Activated CD8-positive, alpha-beta T cell treated with anti-CD3 and anti-CD28 coated beads, Interleukin-2, amount 10 ng/mL, durations not matched to agents 7 days and 5 days (primary cell): ENCODE measurements at regions of chr1 and their contacts with region 1.

Region 1: DNA sequence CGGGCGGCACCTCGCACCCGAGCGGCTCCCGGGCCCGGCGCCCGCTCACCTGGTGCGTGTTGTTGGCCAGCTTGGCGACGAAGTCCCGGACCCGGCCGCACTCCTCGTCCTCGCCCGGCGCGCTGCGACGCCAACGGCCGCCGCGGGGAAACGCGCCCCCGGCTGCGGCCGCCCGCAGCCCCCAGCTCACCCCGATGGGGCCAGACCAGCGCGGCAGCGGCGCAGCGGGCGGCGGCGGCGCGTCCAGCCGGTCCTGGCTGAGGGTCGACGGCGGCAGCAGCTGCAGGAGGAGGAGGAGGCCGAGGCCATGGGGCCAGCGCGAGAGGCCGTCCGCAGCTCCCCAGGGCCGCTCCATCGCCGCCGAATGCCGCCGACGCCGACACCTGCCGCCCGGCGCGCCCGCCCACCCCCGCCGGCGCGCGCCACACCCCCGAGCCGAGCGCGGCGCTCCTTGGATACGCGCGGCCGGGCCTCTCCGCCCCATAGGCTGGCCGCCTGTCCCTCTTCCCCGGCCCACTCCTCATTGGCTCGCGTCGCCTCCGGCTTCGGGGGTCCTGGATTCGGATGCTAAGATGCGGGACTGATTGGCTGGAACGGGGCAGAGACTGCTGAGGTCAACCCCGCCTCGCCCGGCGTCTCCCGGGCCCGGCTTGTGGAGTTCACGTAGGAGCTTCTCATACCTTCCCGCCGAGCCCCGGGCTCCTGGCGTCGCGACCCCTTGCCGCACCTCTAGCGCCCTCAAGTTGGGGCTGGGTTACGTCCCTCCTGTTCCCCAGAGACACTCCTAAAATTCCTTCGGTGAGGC is at the start of gene SORT1:
- DNase-seq: peak; percentile 77
- ATAC-seq: peak; percentile 98
- H3K4me3 Mint-ChIP-seq: peak within 1 kb of the TSS; percentile 82
- H3K27ac Mint-ChIP-seq: peak within 1 kb of the TSS; percentile 33
- H3K4me1 Mint-ChIP-seq: peaks cover 41% of the 10 kb centered on the region
- H3K27me3 Mint-ChIP-seq: peaks cover 34% of the 10 kb centered on the region
- total RNA-seq, gene SORT1: 10.8 to 14.0 TPM

Region 2: GRCh38 chr1:108877348-108878159 is 520.2 kb before region 1 on chr1:
- CTCF ChIA-PET with region 1: no interaction called
- POLR2A ChIA-PET with region 1: no interaction called
- DNase-seq: no peak
- ATAC-seq: no peak
- H3K4me3 Mint-ChIP-seq: peak overlapping the region; percentile 96
- H3K27ac Mint-ChIP-seq: peak overlapping the region; percentile 89
- H3K4me1 Mint-ChIP-seq: peaks cover 24% of the 10 kb centered on the region
- H3K27me3 Mint-ChIP-seq: peaks cover 23% of the 10 kb centered on the region

Region 3: DNA sequence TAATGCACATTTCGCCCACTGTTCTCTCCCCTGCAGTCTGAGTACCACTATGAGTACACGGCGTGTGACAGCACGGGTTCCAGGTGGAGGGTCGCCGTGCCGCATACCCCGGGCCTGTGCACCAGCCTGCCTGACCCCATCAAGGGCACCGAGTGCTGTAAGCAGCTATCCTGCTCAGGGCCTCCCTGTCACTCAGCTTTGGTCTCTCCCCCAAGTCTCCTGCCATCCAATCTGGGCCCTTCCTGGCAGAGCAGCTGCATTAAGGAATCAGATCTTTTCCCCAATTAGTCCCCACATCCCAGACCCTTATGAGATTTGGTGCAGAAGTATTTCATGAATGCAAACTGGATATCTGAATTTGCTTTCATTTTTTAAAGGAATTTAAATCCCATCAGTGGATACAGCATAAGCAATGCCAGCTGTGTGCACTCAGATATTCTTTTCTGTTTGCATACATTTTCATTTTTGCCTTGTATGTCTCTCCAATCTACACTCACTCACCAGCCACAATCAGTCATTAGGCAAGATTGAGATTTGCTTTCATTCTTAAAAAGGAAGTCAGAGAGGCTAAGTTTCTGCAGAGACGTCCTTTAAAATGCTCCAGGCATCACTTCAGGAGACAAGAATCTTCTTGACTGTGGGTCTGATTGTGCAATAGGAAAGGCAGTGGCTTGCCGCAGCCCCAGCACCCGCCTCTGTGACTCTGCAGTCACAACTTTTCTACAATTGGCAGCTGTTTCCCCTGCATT is 235.7 kb before region 1 on chr1:
- CTCF ChIA-PET with region 1: no interaction called
- POLR2A ChIA-PET with region 1: no interaction called
- DNase-seq: peak; percentile 75
- ATAC-seq: peak; percentile 92
- H3K4me3 Mint-ChIP-seq: peak overlapping the region; percentile 42
- H3K27ac Mint-ChIP-seq: peak overlapping the region; percentile 72
- H3K4me1 Mint-ChIP-seq: peaks cover 24% of the 10 kb centered on the region
- H3K27me3 Mint-ChIP-seq: no peaks in the 10 kb centered on the region

Region 4: DNA sequence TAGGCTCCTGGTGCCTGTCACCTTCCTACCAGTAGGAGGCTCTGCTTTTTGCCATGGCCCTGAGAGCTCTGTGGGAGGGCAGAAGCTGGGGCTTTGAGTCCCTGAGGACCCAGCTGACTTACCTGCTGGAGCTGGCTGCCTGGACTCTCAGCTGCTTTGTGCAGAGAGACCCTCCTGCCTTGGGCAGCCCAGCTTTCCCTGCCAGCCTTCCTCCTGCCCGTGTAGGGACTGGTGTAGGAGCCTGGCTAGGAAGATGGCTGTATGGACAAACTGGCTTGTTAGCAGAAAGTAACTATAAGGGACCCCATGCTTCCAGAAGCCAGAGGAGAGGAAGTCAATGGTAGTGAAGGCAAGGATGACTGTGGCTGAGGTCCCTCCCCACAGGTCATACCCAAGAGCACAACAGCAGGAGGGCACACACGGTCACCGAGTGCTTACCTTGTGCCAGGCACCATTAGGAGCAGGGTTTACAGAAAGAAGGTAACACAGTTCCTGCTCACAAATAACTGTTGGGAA is 158.1 kb before region 1 on chr1:
- CTCF ChIA-PET with region 1: interaction called, 15 read pairs
- POLR2A ChIA-PET with region 1: no interaction called
- DNase-seq: peak; percentile 44
- ATAC-seq: peak; percentile 57
- H3K4me3 Mint-ChIP-seq: no peak overlapping the region
- H3K27ac Mint-ChIP-seq: no peak overlapping the region
- H3K4me1 Mint-ChIP-seq: peaks cover 14% of the 10 kb centered on the region
- H3K27me3 Mint-ChIP-seq: peaks cover 13% of the 10 kb centered on the region

Region 5: GRCh38 chr1:109263597-109264398 is 133.9 kb before region 1 on chr1:
- CTCF ChIA-PET with region 1: interaction called, 51 read pairs
- POLR2A ChIA-PET with region 1: no interaction called
- DNase-seq: peak; percentile 86
- ATAC-seq: peak; percentile 93
- H3K4me3 Mint-ChIP-seq: no peak overlapping the region
- H3K27ac Mint-ChIP-seq: peak overlapping the region; percentile 39
- H3K4me1 Mint-ChIP-seq: peaks cover 4% of the 10 kb centered on the region
- H3K27me3 Mint-ChIP-seq: no peaks in the 10 kb centered on the region

Region 6: GRCh38 chr1:109277434-109278204 is 120.1 kb before region 1 on chr1:
- CTCF ChIA-PET with region 1: interaction called, 166 read pairs
- POLR2A ChIA-PET with region 1: interaction called, 7 read pairs
- DNase-seq: peak; percentile 79
- ATAC-seq: peak; percentile 79
- H3K4me3 Mint-ChIP-seq: no peak overlapping the region
- H3K27ac Mint-ChIP-seq: peak overlapping the region; percentile 54
- H3K4me1 Mint-ChIP-seq: peaks cover 45% of the 10 kb centered on the region
- H3K27me3 Mint-ChIP-seq: no peaks in the 10 kb centered on the region

Region 7: GRCh38 chr1:109282952-109283747 is 114.6 kb before region 1 on chr1 and contains the start of gene PSRC1:
- CTCF ChIA-PET with region 1: interaction called, 166 read pairs
- POLR2A ChIA-PET with region 1: interaction called, 7 read pairs
- DNase-seq: peak; percentile 93
- ATAC-seq: peak; percentile 97
- H3K4me3 Mint-ChIP-seq: peak within 1 kb of the TSS; percentile 99
- H3K27ac Mint-ChIP-seq: peak within 1 kb of the TSS; percentile 91
- H3K4me1 Mint-ChIP-seq: peaks cover 31% of the 10 kb centered on the region
- H3K27me3 Mint-ChIP-seq: peaks cover 7% of the 10 kb centered on the region
- total RNA-seq, gene PSRC1: 38.2 to 40.7 TPM

Region 8: DNA sequence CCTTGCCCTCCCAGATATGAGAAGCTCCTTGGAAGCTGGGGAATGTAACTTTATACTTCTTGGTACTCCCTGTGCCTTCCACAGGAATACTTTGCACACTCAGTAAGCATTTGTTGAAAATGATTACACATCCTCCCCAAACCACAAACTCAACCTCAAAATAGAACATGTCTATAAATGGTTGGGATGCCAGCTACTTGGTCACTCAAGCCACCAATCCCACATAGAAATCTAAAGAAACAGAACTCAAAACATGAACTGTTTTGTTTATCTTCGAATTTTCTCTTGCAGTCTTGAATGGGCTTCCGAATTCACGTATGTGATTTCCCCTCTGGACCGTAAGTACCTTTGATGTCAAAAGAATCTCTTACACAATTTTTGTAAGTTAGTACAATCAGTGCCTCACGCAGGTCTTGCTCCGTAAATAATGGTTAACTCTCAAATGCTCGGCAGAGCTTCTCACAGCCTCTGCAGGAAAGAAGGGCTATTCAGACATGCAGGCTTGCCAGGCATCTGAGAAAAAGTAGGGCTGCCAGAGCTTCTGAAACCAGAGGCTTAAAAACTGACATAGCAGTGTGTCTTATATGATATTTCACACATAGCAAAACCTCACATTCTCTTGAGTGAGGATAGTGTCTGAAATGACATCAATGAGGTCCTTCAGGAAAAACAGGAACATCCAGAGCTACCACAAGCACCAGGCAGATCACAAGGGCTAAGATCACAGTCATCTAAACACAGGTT is 26.9 kb before region 1 on chr1:
- CTCF ChIA-PET with region 1: interaction called, 10 read pairs
- POLR2A ChIA-PET with region 1: no interaction called
- DNase-seq: peak; percentile 25
- ATAC-seq: no peak
- H3K4me3 Mint-ChIP-seq: peak overlapping the region; percentile 57
- H3K27ac Mint-ChIP-seq: no peak overlapping the region
- H3K4me1 Mint-ChIP-seq: peaks cover 57% of the 10 kb centered on the region
- H3K27me3 Mint-ChIP-seq: peaks cover 5% of the 10 kb centered on the region

Region 9: GRCh38 chr1:109385417-109385816 is 12.3 kb before region 1 on chr1:
- CTCF ChIA-PET with region 1: interaction called, 20 read pairs
- POLR2A ChIA-PET with region 1: no interaction called
- DNase-seq: no peak
- ATAC-seq: no peak
- H3K4me3 Mint-ChIP-seq: no peak overlapping the region
- H3K27ac Mint-ChIP-seq: no peak overlapping the region
- H3K4me1 Mint-ChIP-seq: peaks cover 12% of the 10 kb centered on the region
- H3K27me3 Mint-ChIP-seq: peaks cover 15% of the 10 kb centered on the region

Region 10: DNA sequence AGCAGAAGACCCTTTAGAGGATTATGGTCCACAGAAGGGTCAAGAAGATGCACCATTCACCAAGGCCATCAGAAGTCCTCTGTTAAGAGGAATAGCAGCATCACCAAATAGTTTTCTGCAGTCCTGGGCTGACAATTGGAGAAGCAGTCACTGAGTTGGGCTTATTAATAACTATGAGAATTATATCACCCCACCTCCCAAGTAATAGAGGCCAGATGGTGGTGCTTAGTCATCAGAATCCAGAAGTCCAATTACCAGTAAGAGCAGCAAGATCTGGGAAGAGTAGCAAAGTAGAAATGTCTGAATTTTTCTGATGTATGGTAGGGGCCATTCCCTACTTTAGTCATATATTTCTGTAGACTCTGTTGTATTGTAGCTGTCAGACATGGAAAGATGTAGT is 34.6 kb after region 1 on chr1:
- CTCF ChIA-PET with region 1: no interaction called
- POLR2A ChIA-PET with region 1: no interaction called
- DNase-seq: no peak
- ATAC-seq: no peak
- H3K4me3 Mint-ChIP-seq: no peak overlapping the region
- H3K27ac Mint-ChIP-seq: no peak overlapping the region
- H3K4me1 Mint-ChIP-seq: peaks cover 7% of the 10 kb centered on the region
- H3K27me3 Mint-ChIP-seq: peaks cover 7% of the 10 kb centered on the region